PC-3 (cell line): ENCODE measurements at regions of chr11 and their contacts with region 1.

Region 1: GRCh38 chr11:106482917-106483785 is 405.7 kb downstream of the AASDHPPT start:
- DNase-seq: peak; percentile 89
- ATAC-seq: peak; percentile 93
- H3K4me3 ChIP-seq: peak overlapping the region; percentile 56
- H3K27ac ChIP-seq: peak overlapping the region; percentile 85
- H3K4me1 ChIP-seq: peaks cover 27% of the 10 kb centered on the region
- H3K27me3 ChIP-seq: no peaks in the 10 kb centered on the region
- CTCF ChIP-seq: no peak

Region 2: GRCh38 chr11:106540001-106540400 is 56.9 kb after region 1 on chr11:
- CTCF ChIA-PET with region 1: interaction called, 15 read pairs
- POLR2A ChIA-PET with region 1: no interaction called
- intact Hi-C with region 1: no loop called
- DNase-seq: no peak
- ATAC-seq: no peak
- H3K4me3 ChIP-seq: no peak overlapping the region
- H3K27ac ChIP-seq: no peak overlapping the region
- H3K4me1 ChIP-seq: no peaks in the 10 kb centered on the region
- H3K27me3 ChIP-seq: no peaks in the 10 kb centered on the region
- CTCF ChIP-seq: no peak